Left cardiac atrium (tissue), 4 donors: ENCODE measurements at regions of chr12 and their contacts with region 1.

Region 1: GRCh38 chr12:3777206-3777809 is 24.4 kb upstream of the CRACR2A start:
- DNase-seq: no peak
- ATAC-seq: peak; percentile 58 to 65

Region 2: GRCh38 chr12:3299929-3300832 is 477.1 kb before region 1 on chr12:
- intact Hi-C with region 1: loop called (anchors 5 to 10 kb)
- DNase-seq: peak; percentile 92
- ATAC-seq: peak; percentile 59 to 80

Region 3: GRCh38 chr12:3342056-3342455 is 435.3 kb before region 1 on chr12:
- intact Hi-C with region 1: loop called in 1 of 2 experiments (anchors 5 kb)
- DNase-seq: peak; percentile 73
- ATAC-seq: peak; percentile 90 to 93

Region 4: GRCh38 chr12:3658327-3659163 is 118.8 kb before region 1 on chr12:
- intact Hi-C with region 1: loop called (anchors 2 to 5 kb)
- DNase-seq: peak; percentile 47
- ATAC-seq: peak; percentile 66 to 80

Region 5: DNA sequence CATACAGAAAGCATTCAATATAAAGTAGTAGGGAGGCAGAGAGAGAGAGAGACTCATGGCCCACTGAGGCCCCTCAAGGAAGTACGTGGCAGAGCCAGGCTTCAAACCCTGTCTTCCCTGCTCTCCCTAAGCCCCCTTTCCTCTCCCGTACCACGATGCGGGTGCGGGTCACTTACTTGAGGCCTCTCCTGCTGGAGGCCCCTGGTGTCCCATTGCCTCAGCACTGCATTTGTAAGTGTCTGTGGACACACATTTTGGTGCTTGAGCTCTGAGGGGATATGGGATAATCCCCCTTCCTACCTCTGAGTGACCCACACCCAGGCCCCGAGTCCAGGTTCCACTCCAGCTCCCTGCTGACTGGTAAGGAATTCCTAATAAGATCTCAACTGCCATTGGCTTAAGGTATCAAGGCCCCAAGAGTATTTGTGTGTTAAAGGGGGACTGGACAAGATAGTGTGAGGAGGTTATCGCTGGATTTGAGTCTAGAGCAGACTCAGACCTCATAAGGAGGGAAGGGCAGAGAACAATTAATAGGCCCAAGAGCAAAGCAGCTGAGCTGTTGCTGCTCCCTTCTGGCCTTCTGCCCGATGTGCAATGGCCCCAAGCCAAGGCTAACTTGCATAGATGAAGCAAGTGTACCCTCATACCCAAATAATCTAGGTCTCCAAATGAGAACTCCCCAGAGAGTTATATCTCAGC is 96.3 kb before region 1 on chr12:
- intact Hi-C with region 1: loop called in 1 of 2 experiments (anchors 10 kb)
- DNase-seq: peak; percentile 69
- ATAC-seq: peak; percentile 36 to 60